PC-3 (cell line): ENCODE measurements at regions of chr15 and their contacts with region 1.

Region 1: DNA sequence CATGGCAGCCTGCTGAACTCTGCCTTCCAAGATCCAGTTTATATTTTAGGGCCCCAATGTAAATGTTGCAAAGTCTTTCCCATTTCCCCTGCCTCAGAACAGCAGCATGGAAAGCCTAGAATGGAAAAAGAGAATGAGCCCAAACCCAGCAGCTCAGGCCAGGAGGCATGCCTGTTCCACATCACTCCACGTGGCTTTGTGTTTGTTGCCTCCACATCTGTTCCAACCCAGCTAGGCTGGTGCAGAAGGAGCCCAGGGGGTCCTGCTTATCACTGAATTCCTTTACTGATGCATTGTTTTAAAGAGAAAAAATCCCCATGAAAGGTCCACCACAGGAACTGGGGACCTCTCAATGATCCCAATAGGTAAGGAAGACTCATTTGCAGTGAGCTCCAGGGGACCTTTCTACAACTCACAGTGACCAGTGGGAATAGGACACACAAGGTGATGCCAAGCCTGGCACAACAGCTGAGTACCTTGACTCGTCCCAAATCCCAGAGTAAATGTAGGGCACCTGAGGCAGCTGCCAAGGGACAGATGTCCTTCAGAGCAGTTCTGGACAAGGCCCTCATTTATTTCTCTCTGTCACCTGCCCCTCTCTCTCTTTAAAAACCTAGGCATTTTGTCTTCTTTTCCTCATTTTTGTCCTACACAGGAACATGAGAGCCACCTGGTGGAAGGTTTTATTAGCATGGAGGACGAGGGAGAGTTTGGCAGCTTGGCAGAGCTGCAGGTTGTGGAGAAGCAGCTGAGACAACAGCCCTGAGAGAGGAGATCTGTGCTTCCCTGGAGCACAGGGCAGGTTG is 41.7 kb upstream of the ADAMTS17 start:
- DNase-seq: peak; percentile 75
- ATAC-seq: peak; percentile 73
- H3K4me3 ChIP-seq: no peak overlapping the region
- H3K27ac ChIP-seq: no peak overlapping the region
- H3K4me1 ChIP-seq: no peaks in the 10 kb centered on the region
- H3K27me3 ChIP-seq: peaks cover 12% of the 10 kb centered on the region
- CTCF ChIP-seq: peak; percentile 80

Region 2: GRCh38 chr15:100211855-100212850 is 171.4 kb before region 1 on chr15:
- CTCF ChIA-PET with region 1: no interaction called
- POLR2A ChIA-PET with region 1: no interaction called
- intact Hi-C with region 1: no loop called
- DNase-seq: peak; percentile 32
- ATAC-seq: peak; percentile 29; the same call in 1 of the 2 replicates
- H3K4me3 ChIP-seq: no peak overlapping the region
- H3K27ac ChIP-seq: no peak overlapping the region
- H3K4me1 ChIP-seq: peaks cover 11% of the 10 kb centered on the region
- H3K27me3 ChIP-seq: no peaks in the 10 kb centered on the region
- CTCF ChIP-seq: no peak

Region 3: DNA sequence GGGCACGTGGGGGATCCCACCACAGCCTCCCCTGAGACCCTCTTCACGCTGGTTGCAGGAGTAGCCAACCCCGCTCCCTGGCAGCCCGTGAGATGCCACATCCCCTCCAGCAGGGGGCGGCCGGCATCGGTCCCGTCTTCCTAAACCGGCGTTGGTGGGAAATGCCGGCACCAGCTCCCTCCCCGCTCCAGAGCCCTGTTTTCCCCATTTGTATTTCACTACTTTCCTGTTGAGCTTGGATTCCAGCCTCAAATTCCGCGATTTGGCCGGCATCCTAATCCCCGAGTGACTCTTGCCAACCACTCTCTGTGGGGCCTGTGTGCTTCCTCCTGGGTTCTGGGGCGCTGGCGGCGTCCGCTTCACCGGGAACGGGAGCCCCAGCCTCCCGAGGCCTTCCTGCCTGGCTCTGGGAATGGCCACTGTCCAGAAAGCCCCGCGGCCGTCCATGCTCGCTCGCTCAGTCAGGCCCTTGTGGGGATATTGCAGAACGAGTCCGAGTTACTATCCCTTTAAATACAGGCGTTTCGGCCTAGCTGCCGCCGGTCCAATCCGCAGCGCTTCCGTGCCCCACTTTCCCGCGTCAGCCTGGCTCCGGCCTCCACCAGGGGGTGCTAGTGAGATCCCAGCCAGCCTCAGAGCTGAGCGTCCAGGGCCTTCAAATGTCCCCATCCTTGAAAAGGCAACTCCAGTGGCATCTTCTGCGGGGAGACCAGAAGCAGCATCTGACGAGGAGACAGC is 33.6 kb before region 1 on chr15:
- CTCF ChIA-PET with region 1: interaction called, 17 read pairs
- POLR2A ChIA-PET with region 1: no interaction called
- intact Hi-C with region 1: loop called (anchors 1 kb)
- DNase-seq: peak; percentile 92
- ATAC-seq: peak; percentile 92
- H3K4me3 ChIP-seq: peak overlapping the region; percentile 89
- H3K27ac ChIP-seq: peak overlapping the region; percentile 58
- H3K4me1 ChIP-seq: peaks cover 35% of the 10 kb centered on the region
- H3K27me3 ChIP-seq: no peaks in the 10 kb centered on the region
- CTCF ChIP-seq: peak; percentile 66

Region 4: GRCh38 chr15:100529556-100529955 is 146.1 kb after region 1 on chr15:
- CTCF ChIA-PET with region 1: no interaction called
- POLR2A ChIA-PET with region 1: no interaction called
- intact Hi-C with region 1: no loop called
- DNase-seq: no peak
- ATAC-seq: no peak
- H3K4me3 ChIP-seq: no peak overlapping the region
- H3K27ac ChIP-seq: no peak overlapping the region
- H3K4me1 ChIP-seq: no peaks in the 10 kb centered on the region
- H3K27me3 ChIP-seq: peaks cover 83% of the 10 kb centered on the region
- CTCF ChIP-seq: no peak

Region 5: DNA sequence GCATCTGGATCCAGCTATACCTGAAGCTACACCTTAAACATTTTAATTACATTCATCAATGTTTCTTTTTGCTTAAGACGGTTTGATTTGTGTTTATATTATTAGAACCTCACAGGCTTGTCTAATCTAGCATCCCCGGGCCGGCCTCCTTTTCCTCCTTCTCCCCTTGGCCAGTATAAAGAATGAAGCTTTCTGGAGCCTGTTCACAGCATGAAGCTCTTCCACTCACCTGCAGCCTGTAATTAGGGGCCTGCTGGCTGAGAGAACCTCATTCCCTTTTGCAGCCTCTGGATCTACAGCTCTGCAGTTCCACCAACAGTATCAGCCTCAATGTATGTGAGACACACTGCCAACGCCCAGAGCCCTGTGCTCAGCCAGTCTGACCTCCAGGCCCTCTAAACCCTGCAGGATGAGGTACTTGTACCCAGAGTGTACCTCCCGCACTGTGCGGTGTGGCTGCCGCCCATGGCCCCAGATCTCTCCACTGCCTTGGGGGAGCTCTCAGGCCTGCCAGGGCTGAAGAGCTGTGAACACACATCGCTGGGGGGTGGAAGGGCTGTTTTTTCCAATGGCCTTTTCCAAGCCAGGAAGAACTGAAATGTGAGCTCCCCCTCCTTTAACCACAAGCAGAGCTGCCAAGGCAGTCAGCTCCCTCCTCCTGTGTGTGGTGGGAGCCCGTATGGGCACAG is 381.4 kb after region 1 on chr15:
- CTCF ChIA-PET with region 1: no interaction called
- POLR2A ChIA-PET with region 1: no interaction called
- intact Hi-C with region 1: no loop called
- DNase-seq: peak; percentile 35
- ATAC-seq: peak; percentile 45
- H3K4me3 ChIP-seq: no peak overlapping the region
- H3K27ac ChIP-seq: no peak overlapping the region
- H3K4me1 ChIP-seq: peaks cover 14% of the 10 kb centered on the region
- H3K27me3 ChIP-seq: no peaks in the 10 kb centered on the region
- CTCF ChIP-seq: no peak